CD4-positive, alpha-beta T cell (primary cell): ENCODE measurements at regions of chr14 and their contacts with region 1.

Region 1: DNA sequence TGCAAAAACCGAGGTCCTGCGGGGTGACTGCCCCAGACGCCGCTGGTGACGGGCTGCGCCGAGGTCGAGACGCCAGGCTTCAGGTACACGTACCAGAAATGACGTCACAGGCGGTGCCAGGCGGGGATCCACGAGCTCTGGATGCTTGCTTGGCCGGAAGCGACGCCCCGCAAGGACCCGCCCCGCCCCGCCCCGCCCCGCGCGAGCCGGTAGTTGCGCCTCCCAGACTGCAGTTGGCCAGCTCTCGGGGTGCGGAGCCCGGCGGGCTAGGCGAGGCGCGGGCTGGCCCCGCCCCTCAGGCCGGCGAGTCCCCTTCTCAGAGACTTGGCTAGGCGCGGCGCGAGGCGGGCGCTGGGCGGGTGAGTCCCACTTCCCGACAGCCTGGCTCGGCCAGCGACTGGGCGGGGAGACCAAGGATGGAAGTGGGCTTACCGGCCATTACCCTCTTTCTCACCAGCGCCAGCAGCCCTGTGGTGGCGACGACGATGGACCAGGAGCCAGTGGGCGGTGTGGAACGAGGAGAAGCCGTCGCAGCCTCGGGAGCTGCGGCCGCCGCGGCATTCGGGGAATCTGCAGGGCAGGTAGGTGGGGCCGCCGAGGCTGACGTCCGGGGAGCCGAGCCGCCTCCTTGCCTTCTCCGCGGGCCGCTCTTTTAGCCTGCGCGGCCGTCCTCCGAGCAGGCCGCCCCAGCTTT is at the start of gene FAM177A1:
- DNase-seq: peak; percentile 94 to 100 (median 98)
- ATAC-seq: peak; percentile 83
- H3K4me3 ChIP-seq: peak within 1 kb of the TSS; percentile 68
- H3K4me3 Mint-ChIP-seq: peak within 1 kb of the TSS; percentile 91
- H3K27ac ChIP-seq: peak within 1 kb of the TSS; percentile 96 to 97
- H3K27ac Mint-ChIP-seq: peak within 1 kb of the TSS; percentile 94
- H3K4me1 ChIP-seq: peaks cover 11% of the 10 kb centered on the region
- H3K4me1 Mint-ChIP-seq: peaks cover 36% of the 10 kb centered on the region
- H3K27me3 ChIP-seq: no peaks in the 10 kb centered on the region
- H3K27me3 Mint-ChIP-seq: no peaks in the 10 kb centered on the region
- CTCF ChIP-seq: no peak
- total RNA-seq, gene FAM177A1: 172 to 186 TPM

Region 2: DNA sequence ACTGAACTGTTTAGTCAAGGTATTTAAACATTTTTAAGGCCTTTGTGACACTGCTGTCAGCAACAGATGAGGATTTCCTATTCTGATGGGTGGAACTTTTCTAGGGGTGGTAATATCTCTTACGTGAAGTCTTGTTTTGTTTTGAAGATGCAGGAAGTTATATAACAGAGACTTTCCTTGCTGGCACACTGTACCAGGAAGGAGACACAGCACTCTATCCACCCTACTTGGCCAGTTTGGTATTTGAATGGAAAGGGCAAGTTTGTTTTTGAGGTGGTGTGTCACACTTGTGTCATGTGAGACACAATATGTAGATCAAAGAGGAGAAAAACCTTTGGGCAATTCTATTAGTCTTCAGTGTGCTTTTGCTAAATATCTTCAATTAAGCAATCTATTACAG is 115.0 kb before region 1 on chr14:
- CTCF ChIA-PET with region 1: interaction called, 3 read pairs
- POLR2A ChIA-PET with region 1: interaction called, 18 read pairs
- intact Hi-C with region 1: loop called in 1 of 2 experiments (anchors 1 kb)
- DNase-seq: peak in 12 of 14 experiments; percentile 2 to 91 (median 44)
- ATAC-seq: peak; percentile 91
- H3K4me3 ChIP-seq: peak overlapping the region; percentile 17
- H3K4me3 Mint-ChIP-seq: peak overlapping the region; percentile 26
- H3K27ac ChIP-seq: peak overlapping the region; percentile 80 to 93
- H3K27ac Mint-ChIP-seq: peak overlapping the region; percentile 90
- H3K4me1 ChIP-seq: peaks cover 24% of the 10 kb centered on the region
- H3K4me1 Mint-ChIP-seq: peaks cover 37% of the 10 kb centered on the region
- H3K27me3 ChIP-seq: no peaks in the 10 kb centered on the region
- H3K27me3 Mint-ChIP-seq: no peaks in the 10 kb centered on the region
- CTCF ChIP-seq: no peak

Region 3: GRCh38 chr14:35155962-35156361 is 109.8 kb after region 1 on chr14:
- CTCF ChIA-PET with region 1: no interaction called
- POLR2A ChIA-PET with region 1: no interaction called
- intact Hi-C with region 1: no loop called
- DNase-seq: peak in 3 of 14 experiments; percentile 44 to 61 (median 59)
- ATAC-seq: no peak
- H3K4me3 ChIP-seq: no peak overlapping the region
- H3K4me3 Mint-ChIP-seq: no peak overlapping the region
- H3K27ac ChIP-seq: peak overlapping the region in 1 of 2 donors; percentile 30
- H3K27ac Mint-ChIP-seq: peak overlapping the region; percentile 21
- H3K4me1 ChIP-seq: peaks cover 7% of the 10 kb centered on the region
- H3K4me1 Mint-ChIP-seq: peaks cover 60% of the 10 kb centered on the region
- H3K27me3 ChIP-seq: no peaks in the 10 kb centered on the region
- H3K27me3 Mint-ChIP-seq: no peaks in the 10 kb centered on the region
- CTCF ChIP-seq: no peak